Activated CD8-positive, alpha-beta T cell treated with anti-CD3 and anti-CD28 coated beads for 36 hours (primary cell): ENCODE measurements at regions of chr17 and their contacts with region 1.

Region 1: GRCh38 chr17:81018044-81018802 is 16.7 kb upstream of the BAIAP2 start:
- DNase-seq: peak; percentile 71
- ATAC-seq: peak; percentile 92
- H3K4me3 Mint-ChIP-seq: peak overlapping the region; percentile 73
- H3K27ac Mint-ChIP-seq: peak overlapping the region; percentile 93
- H3K4me1 Mint-ChIP-seq: peaks cover 31% of the 10 kb centered on the region
- H3K27me3 Mint-ChIP-seq: no peaks in the 10 kb centered on the region
- CTCF ChIP-seq: no peak

Region 2: DNA sequence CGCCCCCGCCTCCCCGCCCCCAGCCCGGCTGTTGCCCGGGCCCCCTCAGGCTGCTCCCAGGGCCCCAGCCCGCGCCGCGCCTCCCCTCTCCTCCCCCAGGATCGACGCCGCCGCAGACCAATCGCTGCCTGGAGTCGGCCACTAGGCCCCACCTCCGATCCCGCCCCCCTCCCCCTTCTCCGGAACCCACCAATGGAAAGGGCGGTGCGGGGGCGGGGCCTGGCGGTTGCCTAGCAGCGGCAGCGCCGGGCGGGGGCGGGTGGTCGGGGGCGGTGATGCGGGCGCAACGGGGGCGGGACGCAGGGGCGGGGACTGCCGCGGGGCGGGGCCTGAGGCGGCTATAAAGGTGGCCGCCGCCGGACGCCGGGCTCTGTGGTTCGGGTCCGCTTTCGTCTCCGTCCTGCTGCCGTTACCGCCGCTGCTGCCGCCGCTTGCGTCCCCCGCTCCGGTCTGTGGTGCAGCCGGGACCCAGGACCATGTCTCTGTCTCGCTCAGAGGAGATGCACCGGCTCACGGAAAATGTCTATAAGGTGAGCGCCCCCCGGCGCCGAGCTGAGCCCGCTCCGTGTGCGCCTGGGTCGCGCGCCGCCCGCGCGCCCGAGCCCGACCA is 16.7 kb after region 1 on chr17 and contains the start of gene BAIAP2:
- CTCF ChIA-PET with region 1: interaction called, 16 read pairs
- POLR2A ChIA-PET with region 1: interaction called, 3 read pairs
- intact Hi-C with region 1: no loop called
- DNase-seq: peak; percentile 97
- ATAC-seq: peak; percentile 89
- H3K4me3 Mint-ChIP-seq: peak within 1 kb of the TSS; percentile 78
- H3K27ac Mint-ChIP-seq: peak within 1 kb of the TSS; percentile 75
- H3K4me1 Mint-ChIP-seq: peaks cover 8% of the 10 kb centered on the region
- H3K27me3 Mint-ChIP-seq: peaks cover 10% of the 10 kb centered on the region
- CTCF ChIP-seq: no peak
- total RNA-seq, gene BAIAP2: 5.9 to 6.3 TPM

Region 3: DNA sequence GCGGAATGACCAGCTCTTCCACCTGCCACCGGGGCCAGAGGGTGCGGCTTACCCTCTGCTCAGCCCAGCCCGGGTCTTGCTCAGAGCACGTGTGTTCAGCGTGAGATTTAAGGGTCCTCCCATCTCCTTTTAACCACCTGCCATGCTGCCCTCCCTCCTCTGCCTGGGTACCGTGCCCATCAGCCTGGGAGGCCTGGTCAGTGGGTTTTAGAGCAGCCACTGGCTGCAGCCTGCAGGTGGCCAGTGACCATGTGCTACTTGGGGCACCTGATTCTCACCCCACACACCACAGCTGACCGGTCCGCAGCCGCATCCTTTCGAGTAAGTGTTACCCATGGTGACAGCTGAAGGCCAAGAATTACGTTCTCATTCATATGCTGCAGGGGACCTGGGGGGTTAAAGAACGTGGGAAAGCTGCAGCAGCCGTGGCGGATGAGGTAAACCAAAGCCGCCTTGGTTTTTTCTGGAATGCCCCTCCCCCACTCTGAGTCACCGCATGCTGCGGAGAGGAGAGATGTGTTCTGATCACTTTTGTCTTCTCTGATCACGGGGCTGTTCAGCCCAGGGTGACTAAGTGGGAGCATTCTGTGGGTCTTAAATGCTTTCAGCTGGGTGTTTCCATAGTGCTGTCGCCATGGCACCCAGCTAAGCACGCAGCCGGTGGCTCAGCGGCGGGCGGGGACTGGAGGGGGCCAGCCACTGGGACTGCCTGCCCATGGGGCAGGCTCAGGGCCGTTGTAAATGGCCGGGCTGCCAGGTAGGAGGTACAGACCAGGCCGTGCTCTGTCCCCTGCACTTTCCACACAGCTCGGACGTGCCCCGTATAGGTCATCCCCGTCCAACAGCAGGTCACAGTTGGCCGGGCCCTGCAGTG is 76.5 kb after region 1 on chr17:
- CTCF ChIA-PET with region 1: interaction called, 17 read pairs
- POLR2A ChIA-PET with region 1: interaction called, 4 read pairs
- intact Hi-C with region 1: no loop called
- DNase-seq: peak; percentile 97
- ATAC-seq: peak; percentile 91
- H3K4me3 Mint-ChIP-seq: peak overlapping the region; percentile 48
- H3K27ac Mint-ChIP-seq: peak overlapping the region; percentile 75
- H3K4me1 Mint-ChIP-seq: peaks cover 46% of the 10 kb centered on the region
- H3K27me3 Mint-ChIP-seq: no peaks in the 10 kb centered on the region
- CTCF ChIP-seq: no peak